ENCODE measurements at regions of chr9 and their contacts with region 1.

Region 1: DNA sequence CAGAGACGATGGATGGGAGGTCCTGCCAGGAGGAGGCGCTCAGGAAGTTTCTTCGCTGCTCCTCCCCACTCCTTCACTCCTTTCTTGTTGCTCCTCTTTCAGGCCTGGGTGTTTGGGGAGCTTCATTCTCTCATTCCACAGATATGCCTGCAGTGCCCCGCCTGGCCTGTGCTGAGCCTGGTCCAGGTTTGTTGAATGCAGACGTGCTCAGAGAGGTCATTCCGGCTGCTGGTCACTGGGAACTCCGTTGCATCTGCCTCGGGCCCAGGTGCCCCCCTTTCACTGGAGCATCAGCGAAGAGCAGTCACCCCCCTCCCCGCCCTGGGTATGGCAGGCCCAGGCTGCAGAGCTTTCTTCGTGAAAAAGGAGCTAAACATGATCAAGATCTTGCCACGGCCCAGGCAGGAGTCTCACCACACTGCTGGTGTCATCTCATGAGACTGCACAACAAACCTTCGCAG is 15.5 kb downstream of the SURF6 start:
- DNase-seq: no peak
- H3K4me3 ChIP-seq: no peak overlapping the region
- H3K27ac ChIP-seq: no peak overlapping the region
- H3K4me1 ChIP-seq: no peaks in the 10 kb centered on the region
- H3K27me3 ChIP-seq: no peaks in the 10 kb centered on the region
- CTCF ChIP-seq: no peak
- POLR2A ChIP-seq: no peak

Region 2: DNA sequence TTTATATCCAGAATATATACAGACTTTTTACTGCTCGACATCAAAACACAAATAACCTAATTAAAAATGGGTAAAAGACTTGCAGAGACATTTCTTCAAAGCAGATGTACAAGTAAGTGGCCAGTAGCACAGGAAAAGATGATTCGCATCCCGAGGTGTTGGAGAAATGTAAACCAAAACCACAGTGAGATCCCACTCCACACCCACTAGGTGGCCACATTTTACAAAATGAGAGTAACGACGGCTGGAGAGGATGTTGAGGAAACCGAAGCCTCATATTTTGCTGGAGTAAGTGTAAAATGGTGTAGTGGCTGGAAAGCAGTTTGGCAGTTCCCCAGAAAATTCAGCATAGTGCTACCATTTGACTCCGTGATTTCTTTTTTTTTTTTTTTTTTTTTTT is 135.5 kb before region 1 on chr9:
- intact Hi-C with region 1: loop called (anchors 10 kb)
- DNase-seq: peak; percentile 77
- H3K4me3 ChIP-seq: no peak overlapping the region
- H3K27ac ChIP-seq: no peak overlapping the region
- H3K4me1 ChIP-seq: no peaks in the 10 kb centered on the region
- H3K27me3 ChIP-seq: no peaks in the 10 kb centered on the region
- CTCF ChIP-seq: peak; percentile 59 to 88 (median 71)
- POLR2A ChIP-seq: no peak

Region 3: DNA sequence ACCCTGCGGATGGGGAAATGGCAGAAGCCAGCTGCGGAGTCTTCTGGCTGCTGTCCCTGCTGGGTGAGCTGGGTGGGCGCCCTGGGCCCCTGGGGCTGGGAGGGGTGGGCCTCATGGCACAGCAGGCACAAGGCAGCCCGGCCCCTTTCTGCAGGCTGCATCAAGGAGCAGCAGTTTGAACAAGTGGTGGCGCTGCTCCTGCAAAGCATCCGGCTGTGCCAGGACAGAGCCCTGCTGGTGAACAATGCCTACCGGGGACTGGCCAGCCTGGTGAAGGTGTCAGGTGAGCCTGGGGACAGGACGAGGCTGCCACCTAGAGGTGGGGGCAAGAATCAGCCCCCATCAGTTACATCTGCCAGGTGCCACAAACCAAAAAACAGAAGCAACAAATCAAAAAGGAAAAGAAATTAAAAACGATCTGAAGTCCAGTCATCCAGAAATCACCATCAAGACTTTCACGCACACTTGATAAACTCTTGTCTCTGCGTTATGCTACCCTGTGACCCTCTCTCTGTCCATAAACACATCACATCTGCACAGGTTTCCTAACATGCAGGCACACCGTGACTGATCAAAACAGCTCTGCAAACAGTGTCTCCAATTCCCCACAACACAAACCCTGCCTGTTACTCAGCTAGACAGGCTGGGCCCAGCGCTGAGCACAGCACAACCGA is 83.5 kb after region 1 on chr9:
- intact Hi-C with region 1: no loop called
- DNase-seq: no peak
- H3K4me3 ChIP-seq: no peak overlapping the region
- H3K27ac ChIP-seq: no peak overlapping the region
- H3K4me1 ChIP-seq: no peaks in the 10 kb centered on the region
- H3K27me3 ChIP-seq: no peaks in the 10 kb centered on the region
- CTCF ChIP-seq: peak in 1 of 3 experiments; percentile 35
- POLR2A ChIP-seq: no peak

Region 4: DNA sequence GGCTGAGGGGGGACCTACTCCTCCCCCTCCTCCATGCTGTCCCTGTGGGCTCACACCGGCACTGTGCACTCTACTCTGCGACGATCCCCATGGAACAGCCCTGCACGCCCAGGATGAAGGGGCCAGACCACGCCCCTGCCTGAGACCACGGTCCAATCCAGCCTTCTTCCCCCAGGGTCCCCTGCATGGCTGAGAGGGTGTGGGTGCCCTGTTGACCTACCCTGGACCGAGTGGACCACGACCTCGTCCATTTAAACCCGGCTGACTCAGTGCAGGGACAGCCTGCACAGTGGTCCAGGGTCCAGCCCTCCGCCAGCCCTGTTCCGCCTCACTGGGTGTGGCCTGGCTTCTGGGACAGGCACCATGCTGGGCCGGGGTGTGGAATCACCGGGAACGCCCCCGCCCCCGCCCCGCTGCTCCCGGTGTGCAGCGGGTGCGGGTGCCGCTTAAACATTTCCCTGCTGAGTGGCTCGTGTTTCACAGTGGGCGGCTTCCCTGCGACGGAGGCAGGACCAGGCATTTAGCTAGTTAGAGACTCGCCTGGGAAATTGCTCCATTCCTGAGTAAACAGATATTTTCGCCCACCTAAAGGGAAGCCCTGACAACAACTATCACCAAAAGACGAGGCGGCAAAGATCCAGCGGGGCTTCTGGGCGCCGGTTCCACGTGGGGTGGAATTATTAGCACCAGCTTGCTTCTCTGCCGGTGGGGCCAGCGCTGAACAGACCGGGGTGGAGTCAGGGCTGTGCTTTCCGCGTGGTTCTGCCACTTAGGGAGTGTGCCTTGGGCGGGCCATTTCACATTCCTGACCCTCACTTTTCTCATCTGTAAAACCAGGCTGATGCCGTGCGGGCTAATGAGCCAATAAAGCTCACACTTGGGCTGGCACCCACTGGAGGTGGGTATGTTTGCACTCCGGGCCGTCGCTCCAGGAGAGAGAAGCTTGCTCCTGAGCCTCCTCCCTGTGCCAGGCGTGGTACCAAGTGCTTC is 338.3 kb after region 1 on chr9:
- intact Hi-C with region 1: no loop called
- DNase-seq: peak; percentile 25
- H3K4me3 ChIP-seq: no peak overlapping the region
- H3K27ac ChIP-seq: no peak overlapping the region
- H3K4me1 ChIP-seq: peaks cover 8% of the 10 kb centered on the region
- H3K27me3 ChIP-seq: no peaks in the 10 kb centered on the region
- CTCF ChIP-seq: no peak
- POLR2A ChIP-seq: no peak